Right ventricle myocardium inferior (tissue), 1 donor: ENCODE measurements at regions of chr4 and their contacts with region 1.

Region 1: DNA sequence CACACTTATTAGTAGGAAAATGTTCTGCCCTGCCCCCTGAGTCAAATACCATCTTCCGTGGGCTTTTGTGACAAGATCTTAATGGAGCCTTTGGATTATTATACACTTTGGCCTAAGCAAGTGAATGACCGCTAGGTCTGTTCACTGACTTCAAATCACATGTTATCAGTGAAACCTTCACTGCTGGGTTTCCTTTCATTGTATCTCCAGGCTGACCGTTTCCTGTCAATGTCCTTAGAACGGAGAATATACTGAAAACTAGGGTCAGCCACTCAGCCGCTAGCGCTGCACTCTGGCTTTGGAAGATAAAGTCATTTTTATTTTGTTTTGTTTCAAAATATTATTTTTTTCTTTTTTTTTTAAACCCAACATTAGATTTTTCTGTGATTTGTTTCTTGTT is 107.0 kb upstream of the TLL1 start:
- DNase-seq: no peak
- ATAC-seq: no peak

Region 2: DNA sequence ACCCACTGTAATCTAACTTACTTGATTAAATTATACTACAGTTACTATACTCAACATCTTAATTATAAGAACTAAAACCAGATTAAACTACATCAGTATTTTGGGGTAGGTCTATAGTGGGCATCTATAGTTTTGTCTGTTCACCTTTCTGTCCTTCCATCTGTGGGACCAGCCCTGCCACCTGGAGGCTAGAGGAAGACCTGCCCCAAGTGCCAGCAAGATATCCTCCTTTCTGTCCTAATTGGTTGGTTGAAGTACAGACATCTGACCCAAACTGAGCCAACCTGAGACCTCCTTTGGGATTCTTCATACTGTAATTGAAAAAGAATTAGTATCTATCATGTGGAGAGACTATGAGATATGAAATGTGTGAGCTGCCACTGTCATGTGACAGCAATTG is 65.2 kb before region 1 on chr4:
- intact Hi-C with region 1: no loop called
- DNase-seq: no peak
- ATAC-seq: no peak

Region 3: DNA sequence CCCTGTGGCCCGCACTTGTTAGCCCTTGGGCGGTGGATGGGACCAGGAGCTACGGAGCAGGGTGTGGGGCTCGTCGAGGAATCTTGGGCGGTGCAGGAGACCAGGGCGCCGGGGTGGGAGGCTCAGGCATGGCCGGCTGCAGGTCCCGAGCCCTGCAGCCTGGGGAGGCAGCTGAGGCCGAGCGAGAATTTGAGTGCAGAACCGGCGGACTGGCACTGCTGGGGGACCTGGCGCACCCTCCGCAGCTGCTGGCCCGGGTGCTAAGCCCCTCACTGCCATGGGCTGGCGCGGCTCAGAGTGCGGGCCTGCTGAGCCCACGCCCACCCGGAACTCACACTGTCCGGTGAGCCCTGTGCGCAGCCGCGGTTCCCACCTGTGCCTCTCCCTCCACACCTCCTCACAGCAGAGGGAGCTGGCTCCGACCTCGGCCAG is 33.4 kb after region 1 on chr4:
- intact Hi-C with region 1: no loop called
- DNase-seq: peak; percentile 57
- ATAC-seq: no peak

Region 4: GRCh38 chr4:165838575-165838974 is 72.6 kb after region 1 on chr4:
- intact Hi-C with region 1: loop called (anchors 2 kb)
- DNase-seq: no peak
- ATAC-seq: peak; percentile 34

Region 5: DNA sequence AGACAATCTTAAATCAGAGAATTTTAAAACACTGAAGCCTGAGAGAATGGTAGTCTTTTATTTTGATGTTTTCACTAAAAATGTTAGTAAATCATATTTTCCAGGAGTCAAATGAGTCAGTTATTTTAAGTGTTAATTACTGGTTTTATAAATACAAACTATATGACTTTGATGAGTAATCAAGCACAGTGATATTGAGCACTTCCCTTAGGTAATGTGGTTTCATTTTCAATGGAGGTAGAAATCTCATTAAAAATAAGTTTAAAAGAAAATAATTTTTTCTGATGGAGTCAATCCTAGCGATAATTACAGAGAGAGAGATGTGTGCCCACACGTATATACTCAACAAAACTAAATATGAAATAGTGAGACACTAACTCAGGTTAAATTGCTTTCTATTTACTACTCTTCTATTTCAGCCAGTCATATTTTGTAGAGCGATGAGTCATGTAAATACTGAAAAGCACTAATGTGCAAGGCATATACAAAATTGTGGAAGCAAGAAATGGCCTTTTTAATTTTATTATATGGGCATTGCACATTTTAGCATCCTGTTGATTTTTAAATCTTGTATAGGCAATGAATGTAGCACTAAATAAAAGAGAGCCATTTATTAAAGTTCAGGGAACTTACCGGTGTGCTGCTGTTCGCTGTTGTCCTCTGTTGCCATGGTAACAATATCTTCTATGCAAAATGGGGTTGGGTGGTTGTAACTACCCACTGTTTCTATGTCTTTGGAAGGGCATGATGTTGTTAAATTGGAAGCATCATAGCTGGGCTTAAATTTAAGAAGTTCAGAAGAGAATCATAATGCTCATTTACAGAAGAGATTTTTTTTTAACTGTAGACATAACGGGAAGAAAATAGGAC is 620.7 kb after region 1 on chr4:
- intact Hi-C with region 1: no loop called
- DNase-seq: no peak
- ATAC-seq: no peak